Right ventricle myocardium inferior (tissue), 1 donor: ENCODE measurements at regions of chr1 and their contacts with region 1.

Region 1: DNA sequence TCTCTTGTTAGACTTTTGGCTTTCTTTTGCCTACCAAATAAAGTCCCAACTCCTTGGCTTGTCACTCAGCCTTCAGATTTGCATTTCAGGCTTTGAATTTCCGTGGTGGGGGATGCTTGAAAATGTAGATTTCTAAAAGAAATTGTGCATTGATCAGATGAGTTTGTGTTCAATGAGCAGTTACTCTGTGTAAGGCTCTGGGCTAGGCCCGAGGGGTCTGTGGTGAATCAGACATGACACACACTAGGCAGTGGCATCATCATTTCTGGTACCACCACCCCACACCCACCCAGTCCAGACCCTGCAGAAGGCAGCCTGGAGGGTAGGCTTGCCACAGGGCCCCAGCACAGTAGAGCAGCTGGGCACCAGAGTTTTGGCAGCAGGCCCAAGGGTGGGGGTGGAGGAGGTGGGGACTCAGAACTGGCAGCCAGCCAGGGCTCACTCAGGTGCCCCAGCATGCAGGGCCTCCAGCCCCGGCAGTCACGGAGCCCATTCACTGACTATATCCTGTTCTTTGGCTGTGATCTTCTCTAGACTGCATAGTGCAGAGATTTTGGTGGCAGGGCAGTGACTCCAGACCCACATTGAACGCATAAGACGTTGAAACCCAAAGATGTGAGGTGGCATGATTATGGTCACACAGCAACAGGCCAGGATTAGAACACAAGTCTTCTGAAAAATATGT is 97.2 kb upstream of the ARTN start:
- DNase-seq: no peak
- ATAC-seq: peak; percentile 54

Region 2: DNA sequence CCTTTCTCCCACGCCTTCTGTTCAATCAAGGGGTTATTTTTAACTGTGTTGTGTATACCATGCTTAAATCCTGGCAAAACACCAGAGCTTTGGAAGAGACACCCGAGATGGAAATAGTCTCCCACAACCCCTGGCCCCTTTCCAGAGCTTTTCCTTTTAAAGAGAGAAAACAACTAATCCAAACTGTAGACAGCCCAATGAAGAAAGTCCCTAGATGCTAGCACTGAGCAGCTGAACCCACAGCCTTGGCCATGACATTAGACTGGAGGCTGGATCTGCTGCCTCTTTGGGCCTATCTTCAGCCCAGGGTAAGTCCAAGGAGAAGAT is 32.3 kb after region 1 on chr1:
- intact Hi-C with region 1: loop called (anchors 5 kb)
- DNase-seq: no peak
- ATAC-seq: peak; percentile 83